H1 (cell line): ENCODE measurements at regions of chr12 and their contacts with region 1.

Region 1: DNA sequence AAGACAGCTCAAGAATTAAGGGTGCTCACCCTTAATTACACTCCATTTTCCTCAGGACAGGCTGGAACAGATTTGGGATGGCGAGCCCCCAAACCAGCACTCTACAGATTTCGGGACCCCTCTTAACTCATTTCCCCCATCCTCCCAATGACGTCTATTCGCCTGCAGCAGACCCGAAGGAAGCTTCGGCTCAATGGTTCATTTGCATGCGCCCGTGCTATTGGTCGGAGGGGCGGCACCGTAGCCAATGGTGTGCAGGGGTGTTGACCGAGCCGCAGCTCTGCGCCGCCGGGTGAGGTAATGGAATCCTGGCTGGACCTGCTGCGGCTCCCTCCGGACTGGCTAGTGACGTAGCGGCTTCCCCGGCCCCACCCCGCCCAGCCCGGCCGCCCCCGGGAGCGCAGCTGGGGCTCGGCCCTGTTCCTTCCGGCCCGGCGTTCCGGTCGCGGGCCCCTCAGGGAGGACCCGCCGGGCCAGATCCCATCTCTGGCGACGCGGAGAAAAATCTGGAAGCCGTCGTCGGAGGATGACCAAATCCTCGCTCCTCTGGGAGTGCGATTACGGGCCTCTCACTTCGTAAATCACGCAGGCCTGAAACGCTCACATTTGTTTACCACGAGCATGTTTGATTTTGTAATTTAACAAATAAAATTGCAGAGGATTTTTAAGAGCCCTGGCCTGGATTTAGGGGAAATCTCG is 18.3 kb upstream of the NR4A1 start:
- DNase-seq: peak; percentile 87 to 90
- H3K4me3 ChIP-seq: peak overlapping the region; percentile 23 to 60 (median 38); a peak in 7 of 8 replicates
- H3K27ac ChIP-seq: peak overlapping the region; percentile 39; the same call in 1 of the 2 replicates
- H3K4me1 ChIP-seq: peaks cover 9 to 13% (median 11%) of the 10 kb centered on the region in 4 experiments
- H3K27me3 ChIP-seq: peaks cover 2 to 32% (median 22%) of the 10 kb centered on the region in 4 experiments; a peak in 6 of 7 replicates
- CTCF ChIP-seq: no peak
- EP300 ChIP-seq: peak in 1 of 2 experiments; percentile 31; a peak in 1 of 3 replicates
- POLR2A ChIP-seq: peak in 1 of 2 experiments; percentile 62; a peak in 2 of 3 replicates
- RAD21 ChIP-seq: no peak

Region 2: DNA sequence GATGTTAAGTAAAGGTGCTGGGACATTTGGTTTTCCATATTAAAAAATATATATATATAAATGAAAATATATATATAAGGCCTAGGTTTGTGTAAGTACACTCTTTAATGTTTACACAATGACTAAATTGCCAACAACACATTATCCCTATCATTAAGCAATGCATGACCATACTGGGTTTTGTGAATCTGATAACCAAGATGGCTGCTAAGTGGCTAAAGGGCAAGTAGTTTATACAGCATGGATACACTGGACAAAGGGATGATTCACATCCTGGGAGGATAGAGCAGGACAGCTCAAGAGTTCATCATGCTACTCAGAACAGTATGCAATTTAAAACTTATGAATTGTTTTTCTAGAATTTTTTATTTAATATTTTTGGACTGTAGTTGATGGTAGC is 273.8 kb before region 1 on chr12:
- CTCF ChIA-PET with region 1: no interaction called
- POLR2A ChIA-PET with region 1: no interaction called
- DNase-seq: no peak
- H3K4me3 ChIP-seq: no peak overlapping the region
- H3K27ac ChIP-seq: no peak overlapping the region
- H3K4me1 ChIP-seq: no peaks in the 10 kb centered on the region
- H3K27me3 ChIP-seq: no peaks in the 10 kb centered on the region
- CTCF ChIP-seq: no peak
- EP300 ChIP-seq: no peak
- POLR2A ChIP-seq: no peak
- RAD21 ChIP-seq: no peak

Region 3: DNA sequence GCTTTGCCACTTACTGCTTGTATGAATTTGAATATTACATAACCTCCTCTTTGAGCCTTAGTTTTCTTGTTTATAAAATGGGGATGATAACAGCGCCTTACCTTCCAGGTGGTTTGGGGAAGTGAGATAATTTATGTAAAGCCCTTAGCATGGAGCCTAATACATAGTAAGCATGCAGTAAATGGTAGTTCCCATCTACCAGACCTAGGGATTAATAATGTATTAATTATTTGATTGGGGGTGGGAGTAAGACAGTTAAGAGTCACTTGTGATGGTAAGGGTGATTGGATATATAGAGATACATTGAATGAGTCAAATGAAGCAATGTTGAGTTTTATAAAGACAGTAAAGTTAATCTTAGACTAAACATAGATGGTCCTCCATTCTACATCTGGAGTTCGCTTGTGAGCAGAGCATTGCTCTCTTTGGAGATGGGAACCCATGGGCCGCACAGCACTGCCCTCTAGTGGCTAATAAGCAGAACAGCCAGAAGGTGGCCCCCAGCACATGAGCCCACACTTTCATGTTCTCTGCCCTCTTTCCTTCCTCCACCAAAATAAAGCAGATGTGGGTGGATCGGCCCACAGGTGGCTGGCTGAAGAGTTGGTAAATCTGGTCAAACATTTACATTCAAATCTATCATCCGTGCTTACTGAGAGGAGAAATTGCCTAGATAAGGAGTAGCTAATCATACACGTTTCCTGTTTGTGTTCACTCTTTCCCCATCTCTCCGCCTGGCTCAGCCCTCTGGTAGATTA is 52.7 kb before region 1 on chr12:
- CTCF ChIA-PET with region 1: interaction called, 1,249 read pairs
- POLR2A ChIA-PET with region 1: no interaction called
- DNase-seq: peak in 1 of 2 experiments; percentile 66
- H3K4me3 ChIP-seq: no peak overlapping the region
- H3K27ac ChIP-seq: no peak overlapping the region
- H3K4me1 ChIP-seq: peaks cover 0 to 1% (median 0%) of the 10 kb centered on the region in 4 experiments; a peak in 1 of 7 replicates
- H3K27me3 ChIP-seq: no peaks in the 10 kb centered on the region
- CTCF ChIP-seq: peak; percentile 94 to 97 (median 96)
- EP300 ChIP-seq: no peak
- POLR2A ChIP-seq: no peak
- RAD21 ChIP-seq: peak; percentile 83 to 88

Region 4: DNA sequence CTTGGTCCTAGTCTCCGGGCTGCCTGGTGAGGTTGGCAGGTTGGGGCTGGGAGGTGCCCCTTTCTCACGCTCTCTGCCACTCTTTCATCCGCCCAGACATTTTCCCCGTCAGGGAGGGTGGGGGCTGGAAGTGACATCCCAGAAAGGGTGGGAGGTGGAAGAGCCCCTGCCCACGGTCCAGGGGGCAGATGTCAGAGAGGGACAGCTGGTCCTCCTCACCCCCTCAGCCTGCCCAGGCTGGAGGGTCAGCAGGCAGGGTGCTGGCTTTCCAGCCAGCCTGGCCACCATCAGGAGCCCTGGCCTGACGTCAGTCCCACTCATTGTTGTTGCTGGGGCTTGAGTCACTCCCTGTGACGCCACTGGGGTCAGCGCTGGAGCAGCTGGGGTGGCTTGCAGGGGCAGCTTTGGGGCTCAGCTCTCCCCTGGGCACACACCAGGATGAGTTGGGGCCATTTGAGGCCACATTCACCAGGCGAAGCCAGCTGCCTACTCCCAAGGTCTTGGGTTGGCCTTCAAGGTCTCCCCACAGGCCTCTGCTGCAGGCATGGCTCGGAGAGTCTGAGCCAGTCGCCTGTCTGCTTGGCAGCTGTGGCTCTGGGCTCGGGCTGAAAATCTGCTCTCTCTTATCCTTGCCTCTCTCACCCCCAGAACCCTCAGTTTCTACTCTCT is 31.2 kb after region 1 on chr12:
- CTCF ChIA-PET with region 1: interaction called, 1,022 read pairs
- POLR2A ChIA-PET with region 1: interaction called, 21 read pairs
- DNase-seq: no peak
- H3K4me3 ChIP-seq: no peak overlapping the region
- H3K27ac ChIP-seq: no peak overlapping the region
- H3K4me1 ChIP-seq: peaks cover 0 to 2% (median 0%) of the 10 kb centered on the region in 4 experiments; a peak in 3 of 7 replicates
- H3K27me3 ChIP-seq: peaks cover 0 to 2% (median 0%) of the 10 kb centered on the region in 4 experiments; a peak in 2 of 7 replicates
- CTCF ChIP-seq: no peak
- EP300 ChIP-seq: no peak
- POLR2A ChIP-seq: no peak
- RAD21 ChIP-seq: no peak

Region 5: GRCh38 chr12:52082988-52083637 is 50.2 kb after region 1 on chr12:
- CTCF ChIA-PET with region 1: interaction called, 1,022 read pairs
- POLR2A ChIA-PET with region 1: interaction called, 82 read pairs
- DNase-seq: peak in 1 of 2 experiments; percentile 85
- H3K4me3 ChIP-seq: no peak overlapping the region
- H3K27ac ChIP-seq: no peak overlapping the region
- H3K4me1 ChIP-seq: peaks cover 5 to 37% (median 14%) of the 10 kb centered on the region in 4 experiments; a peak in 6 of 7 replicates
- H3K27me3 ChIP-seq: peaks cover 0 to 14% (median 1%) of the 10 kb centered on the region in 4 experiments; a peak in 5 of 7 replicates
- CTCF ChIP-seq: peak in 2 of 3 experiments; percentile 92 to 97; a peak in 3 of 4 replicates
- EP300 ChIP-seq: no peak
- POLR2A ChIP-seq: no peak
- RAD21 ChIP-seq: peak; percentile 82

Region 6: GRCh38 chr12:52121824-52122539 is 89.0 kb after region 1 on chr12:
- CTCF ChIA-PET with region 1: interaction called, 338 read pairs
- POLR2A ChIA-PET with region 1: interaction called, 5 read pairs
- DNase-seq: peak; percentile 59 to 90
- H3K4me3 ChIP-seq: peak overlapping the region in 2 of 4 experiments; percentile 4 to 51; a peak in 3 of 8 replicates
- H3K27ac ChIP-seq: no peak overlapping the region
- H3K4me1 ChIP-seq: peaks cover 29 to 46% (median 34%) of the 10 kb centered on the region in 4 experiments
- H3K27me3 ChIP-seq: no peaks in the 10 kb centered on the region
- CTCF ChIP-seq: peak; percentile 73 to 83 (median 78)
- EP300 ChIP-seq: 0 out of 3 replicates have a peak, but pooled peaks of 1 of the 2 experiments have one; percentile 28
- POLR2A ChIP-seq: no peak
- RAD21 ChIP-seq: peak; percentile 60 to 74

Region 7: GRCh38 chr12:52268212-52268611 is 235.3 kb after region 1 on chr12:
- CTCF ChIA-PET with region 1: no interaction called
- POLR2A ChIA-PET with region 1: no interaction called
- DNase-seq: no peak
- H3K4me3 ChIP-seq: no peak overlapping the region
- H3K27ac ChIP-seq: no peak overlapping the region
- H3K4me1 ChIP-seq: no peaks in the 10 kb centered on the region
- H3K27me3 ChIP-seq: no peaks in the 10 kb centered on the region; a peak in 1 of 7 replicates
- CTCF ChIP-seq: no peak
- EP300 ChIP-seq: no peak
- POLR2A ChIP-seq: no peak
- RAD21 ChIP-seq: no peak